ENCODE measurements at regions of chr21 and their contacts with region 1.

Region 1: DNA sequence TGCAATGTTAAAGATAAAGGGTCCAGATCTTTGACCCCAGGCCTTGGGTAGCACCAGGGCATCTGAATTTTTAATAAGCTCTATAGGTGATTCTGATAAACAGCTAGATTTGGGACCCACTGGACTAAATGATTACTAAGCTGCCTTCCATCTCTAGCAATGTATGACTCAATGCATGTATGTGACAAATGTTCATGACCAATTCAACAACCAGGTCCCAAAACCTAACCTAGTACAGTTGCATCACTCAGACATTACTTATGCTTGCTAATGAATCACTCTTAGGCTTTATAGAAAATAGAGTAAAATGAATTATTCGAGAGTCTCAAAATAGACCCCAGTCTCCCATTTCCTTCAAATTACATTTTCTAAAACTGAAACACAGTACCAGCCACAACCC is 35.5 kb downstream of the RCAN1 start:
- DNase-seq: no peak
- H3K4me3 Mint-ChIP-seq: no peak overlapping the region
- H3K27ac Mint-ChIP-seq: no peak overlapping the region
- H3K4me1 Mint-ChIP-seq: peaks cover 13% of the 10 kb centered on the region
- H3K27me3 Mint-ChIP-seq: no peaks in the 10 kb centered on the region

Region 2: DNA sequence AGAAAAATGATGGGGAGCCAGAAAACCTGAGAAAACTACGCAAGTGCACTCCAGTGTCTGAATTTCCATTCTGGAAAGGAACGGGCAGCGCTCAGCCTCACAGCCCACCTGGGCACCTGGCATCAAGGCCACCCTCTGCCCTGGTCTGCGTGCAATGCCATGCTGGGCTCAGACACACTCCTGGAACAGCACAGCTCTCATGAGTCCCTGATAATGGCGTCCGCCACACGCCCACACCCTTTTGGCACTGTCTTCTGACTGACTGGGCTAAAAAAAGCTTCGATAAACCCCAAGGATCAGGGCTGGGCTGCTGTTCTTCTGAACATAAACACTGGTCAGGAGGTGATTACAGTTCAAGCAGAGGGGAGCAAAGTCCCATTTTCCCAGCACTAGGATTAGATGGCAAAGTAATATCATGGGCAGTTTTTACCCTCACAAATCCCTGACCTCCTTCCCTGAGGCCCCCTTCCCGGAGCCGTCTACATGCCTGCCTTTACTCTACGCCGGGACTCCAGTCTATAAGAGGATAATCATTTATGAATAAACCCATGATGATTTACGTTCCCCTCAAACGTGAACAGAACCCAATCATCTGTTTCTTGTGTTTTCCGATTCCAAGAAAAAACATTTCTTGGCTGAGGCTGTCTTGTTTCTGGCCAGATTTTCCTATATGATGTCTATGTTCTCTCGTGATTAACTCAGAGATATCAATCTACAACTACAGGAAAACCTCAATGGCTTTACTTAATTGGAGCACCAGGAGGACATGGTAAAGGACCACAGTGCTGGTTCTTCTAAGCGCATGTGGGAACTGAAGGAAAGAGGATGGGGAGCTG is 12.9 kb after region 1 on chr21:
- CTCF ChIA-PET with region 1: interaction called, 10 read pairs
- POLR2A ChIA-PET with region 1: no interaction called
- DNase-seq: no peak
- H3K4me3 Mint-ChIP-seq: no peak overlapping the region
- H3K27ac Mint-ChIP-seq: no peak overlapping the region
- H3K4me1 Mint-ChIP-seq: peaks cover 11% of the 10 kb centered on the region
- H3K27me3 Mint-ChIP-seq: no peaks in the 10 kb centered on the region